Calu3 (cell line): ENCODE measurements at regions of chr1 and their contacts with region 1.

Region 1: DNA sequence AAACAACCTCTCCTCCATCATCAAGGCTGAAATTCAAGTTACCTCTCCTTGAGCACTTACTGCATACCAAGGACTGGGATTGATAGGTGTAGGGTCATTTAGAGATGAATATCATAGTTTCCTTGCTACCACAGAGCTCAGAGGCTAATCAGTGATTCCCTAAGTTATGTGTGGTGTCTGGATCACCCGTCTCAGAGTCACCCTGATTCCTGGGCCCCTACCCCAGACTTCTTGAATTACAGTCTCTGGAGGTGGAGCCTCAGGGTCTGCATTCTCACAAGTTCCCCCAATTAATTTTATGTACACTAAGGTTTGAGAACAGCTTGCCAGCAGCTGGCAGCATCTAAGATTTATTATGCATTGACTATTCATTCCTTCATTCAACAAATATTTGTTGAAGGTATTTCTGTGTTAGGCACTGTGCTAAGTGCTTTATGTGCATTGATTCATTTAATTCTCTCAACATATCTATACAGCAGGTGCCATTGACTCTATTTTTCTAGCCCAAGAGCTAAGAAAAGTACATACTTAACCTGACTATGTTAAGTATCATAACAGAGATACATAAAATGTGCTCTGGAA is 182.9 kb upstream of the FGGY start:
- DNase-seq: no peak
- H3K4me3 Mint-ChIP-seq: no peak overlapping the region
- H3K27ac Mint-ChIP-seq: peak overlapping the region; percentile 58
- H3K4me1 Mint-ChIP-seq: peaks cover 34% of the 10 kb centered on the region
- H3K27me3 Mint-ChIP-seq: no peaks in the 10 kb centered on the region
- CTCF ChIP-seq: no peak

Region 2: GRCh38 chr1:59146651-59147358 is 32.8 kb after region 1 on chr1:
- CTCF ChIA-PET with region 1: no interaction called
- intact Hi-C with region 1: loop called (anchors 2 kb)
- DNase-seq: peak; percentile 67
- H3K4me3 Mint-ChIP-seq: peak overlapping the region; percentile 63
- H3K27ac Mint-ChIP-seq: peak overlapping the region; percentile 49
- H3K4me1 Mint-ChIP-seq: peaks cover 47% of the 10 kb centered on the region
- H3K27me3 Mint-ChIP-seq: no peaks in the 10 kb centered on the region
- CTCF ChIP-seq: no peak